Heart right ventricle (tissue), 16 donors: ENCODE measurements at regions of chr18 and their contacts with region 1.

Region 1: GRCh38 chr18:26919627-26920026 is 54.1 kb upstream of the AQP4 start:
- DNase-seq: peak in 1 of 2 donors; percentile 16
- ATAC-seq: peak in 6 of 8 donors; percentile 20 to 60 (median 52)
- H3K4me3 ChIP-seq: no peak overlapping the region
- H3K27ac ChIP-seq: no peak overlapping the region
- H3K4me1 ChIP-seq: peaks cover 0 to 19% (median 7%) of the 10 kb centered on the region in 9 donors
- H3K27me3 ChIP-seq: no peaks in the 10 kb centered on the region
- CTCF ChIP-seq: no peak

Region 2: DNA sequence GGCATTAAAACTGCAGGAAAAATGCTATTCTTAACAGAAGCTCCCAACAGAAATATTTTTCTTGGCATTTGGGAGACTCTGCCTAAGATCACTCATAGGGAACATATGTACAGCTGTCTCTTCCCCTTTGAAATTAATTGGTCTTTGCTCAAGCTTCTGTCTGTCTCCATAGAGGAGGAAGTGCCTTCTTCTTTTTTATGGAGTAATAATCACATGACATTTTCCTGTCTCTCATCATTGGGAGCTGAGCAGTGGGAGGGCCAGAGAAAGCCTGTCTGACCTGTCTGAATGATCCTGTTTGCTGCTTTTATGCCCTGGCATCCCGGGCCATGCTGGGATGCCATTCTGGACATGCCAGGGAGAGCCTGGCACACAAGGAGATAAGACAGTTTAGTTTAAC is 199.7 kb before region 1 on chr18:
- intact Hi-C with region 1: no loop called
- DNase-seq: no peak
- ATAC-seq: no peak
- H3K4me3 ChIP-seq: no peak overlapping the region
- H3K27ac ChIP-seq: no peak overlapping the region
- H3K4me1 ChIP-seq: peaks cover 0 to 8% (median 0%) of the 10 kb centered on the region in 9 donors
- H3K27me3 ChIP-seq: peaks cover 0 to 7% (median 0%) of the 10 kb centered on the region in 7 donors
- CTCF ChIP-seq: no peak

Region 3: DNA sequence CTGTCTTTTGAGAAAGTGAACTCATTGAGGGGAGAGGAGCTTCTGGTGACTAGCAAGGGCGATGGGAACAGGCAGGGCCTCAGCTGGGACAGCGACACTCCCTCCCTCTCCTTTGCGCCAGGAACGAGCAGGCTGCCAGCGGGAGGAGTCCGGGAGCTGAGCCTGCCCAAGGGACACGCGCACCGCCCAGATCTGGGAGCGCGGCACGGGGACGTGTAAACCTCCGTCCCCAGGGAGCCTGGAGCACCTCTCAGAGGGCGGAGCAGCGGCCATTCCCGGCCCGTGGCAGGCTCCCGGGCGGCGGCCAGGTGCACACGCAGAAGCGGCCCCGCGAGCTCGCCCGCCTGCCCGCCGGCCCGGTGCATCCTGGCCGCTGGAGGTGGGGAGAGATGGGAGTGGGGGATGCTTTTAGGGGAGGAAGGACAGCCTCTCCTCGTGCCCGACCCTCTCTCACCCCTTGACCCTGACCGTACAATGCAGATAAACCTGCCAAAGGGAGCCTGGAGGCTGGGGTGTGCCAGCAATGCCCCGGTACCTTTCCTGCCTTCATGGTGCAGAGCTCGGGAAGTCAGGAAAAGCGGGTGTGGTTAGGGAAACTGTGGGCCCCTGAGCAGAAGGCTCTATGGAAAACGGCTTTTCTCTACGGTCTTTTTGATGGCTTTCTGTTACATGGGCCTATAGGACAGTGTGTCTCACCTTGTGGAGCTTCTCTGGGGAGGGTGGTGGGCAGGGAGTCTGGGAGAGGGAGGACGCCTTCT is 56.3 kb before region 1 on chr18:
- intact Hi-C with region 1: loop called in 1 of 10 experiments (anchors 10 kb)
- DNase-seq: peak; percentile 61 to 81
- ATAC-seq: peak; percentile 78 to 98 (median 93)
- H3K4me3 ChIP-seq: peak overlapping the region in 9 of 10 donors; percentile 32 to 53 (median 48)
- H3K27ac ChIP-seq: peak overlapping the region in 7 of 10 donors; percentile 34 to 76 (median 65)
- H3K4me1 ChIP-seq: peaks cover 0 to 23% (median 6%) of the 10 kb centered on the region in 9 donors
- H3K27me3 ChIP-seq: peaks cover 0 to 24% (median 4%) of the 10 kb centered on the region in 7 donors
- CTCF ChIP-seq: no peak

Region 4: GRCh38 chr18:27130065-27130630 is 210.5 kb after region 1 on chr18:
- intact Hi-C with region 1: no loop called
- DNase-seq: no peak
- ATAC-seq: no peak
- H3K4me3 ChIP-seq: no peak overlapping the region
- H3K27ac ChIP-seq: no peak overlapping the region
- H3K4me1 ChIP-seq: peaks cover 0 to under 1% (median 0%) of the 10 kb centered on the region in 9 donors
- H3K27me3 ChIP-seq: no peaks in the 10 kb centered on the region
- CTCF ChIP-seq: no peak